HCT116 (cell line): ENCODE measurements at regions of chr12 and their contacts with region 1.

Region 1: DNA sequence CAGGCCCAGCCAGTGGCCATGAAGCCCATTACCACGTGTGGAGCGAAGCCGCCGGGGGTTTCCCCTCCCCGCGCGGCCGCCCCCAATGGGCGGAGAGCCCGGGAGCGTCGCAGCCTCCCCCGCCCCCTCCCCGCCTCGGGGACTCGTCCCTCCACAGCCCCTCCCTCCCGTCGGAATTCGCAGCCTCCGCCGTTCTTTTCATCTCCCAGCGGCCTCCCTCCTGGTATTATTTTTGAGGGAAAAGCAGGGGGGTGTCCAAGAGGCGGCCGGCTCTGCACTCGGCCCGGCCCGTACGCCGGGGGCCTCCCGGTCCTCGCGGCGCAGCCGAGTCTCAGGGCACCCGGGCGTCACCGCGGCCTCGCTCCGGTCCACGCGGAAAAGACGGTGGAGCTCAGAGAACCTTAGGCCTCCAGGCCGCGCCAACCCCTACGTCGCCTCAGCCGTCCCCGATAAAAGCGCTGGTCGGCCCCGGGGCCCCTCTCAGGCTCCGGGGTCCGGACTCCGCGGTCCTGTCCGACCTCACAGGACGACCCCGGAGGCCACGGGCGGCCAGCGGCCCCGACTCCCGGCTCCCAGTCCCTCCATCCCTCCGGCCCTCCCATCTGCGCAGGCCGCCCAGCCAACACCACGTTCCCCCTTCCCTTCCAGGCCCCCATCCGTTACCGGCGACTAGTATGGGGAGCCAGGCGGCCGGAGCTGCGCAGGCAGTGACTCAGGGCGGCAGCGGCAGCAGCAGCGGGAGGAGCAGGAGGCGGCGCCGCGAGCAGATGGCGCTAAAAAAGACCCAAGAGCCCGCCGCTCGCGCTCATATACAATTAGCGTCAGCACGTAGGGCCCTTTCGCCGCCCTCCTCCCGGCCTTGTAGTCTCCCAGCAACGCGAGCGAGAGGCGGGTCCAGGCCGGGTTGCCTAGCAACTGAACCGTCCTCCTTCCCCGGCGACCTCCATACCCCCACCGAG is at the start of gene NAP1L1:
- DNase-seq: peak; percentile 85
- ATAC-seq: peak; percentile 89
- H3K4me3 ChIP-seq: peak within 1 kb of the TSS; percentile 64 to 70
- H3K27ac ChIP-seq: peak within 1 kb of the TSS; percentile 88
- H3K4me1 ChIP-seq: peaks cover 13 to 27% of the 10 kb centered on the region in 2 experiments; a peak in 3 of 4 replicates
- H3K27me3 ChIP-seq: no peaks in the 10 kb centered on the region
- CTCF ChIP-seq: no peak
- POLR2A ChIP-seq: peak; percentile 72
- RAD21 ChIP-seq: no peak
- total RNA-seq, gene NAP1L1: 531 TPM

Region 2: DNA sequence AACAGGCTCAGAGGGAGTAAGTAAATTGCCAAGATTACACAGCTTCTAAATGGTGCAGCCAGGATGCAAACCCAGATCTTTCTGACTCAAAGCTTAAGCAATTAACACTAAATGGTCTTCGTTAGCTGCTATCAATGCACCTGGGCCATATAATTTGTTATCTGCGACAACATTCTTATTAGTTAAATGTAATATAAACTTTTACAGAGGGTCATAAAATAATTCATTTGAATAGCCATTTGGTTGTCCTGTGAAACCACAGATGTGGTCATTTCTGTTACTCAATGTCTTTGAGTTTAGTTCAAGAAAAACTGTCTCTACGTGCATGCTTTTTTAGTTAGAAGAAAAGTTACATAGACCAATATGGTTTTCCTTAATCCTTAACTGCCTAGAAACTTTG is 22.4 kb after region 1 on chr12:
- CTCF ChIA-PET with region 1: no interaction called
- POLR2A ChIA-PET with region 1: no interaction called
- RAD21 ChIA-PET with region 1: no interaction called
- intact Hi-C with region 1: no loop called
- DNase-seq: no peak
- ATAC-seq: no peak
- H3K4me3 ChIP-seq: no peak overlapping the region
- H3K27ac ChIP-seq: no peak overlapping the region
- H3K4me1 ChIP-seq: peaks cover 0 to 4% of the 10 kb centered on the region in 2 experiments; a peak in 1 of 4 replicates
- H3K27me3 ChIP-seq: no peaks in the 10 kb centered on the region
- CTCF ChIP-seq: no peak
- POLR2A ChIP-seq: no peak
- RAD21 ChIP-seq: no peak

Region 3: DNA sequence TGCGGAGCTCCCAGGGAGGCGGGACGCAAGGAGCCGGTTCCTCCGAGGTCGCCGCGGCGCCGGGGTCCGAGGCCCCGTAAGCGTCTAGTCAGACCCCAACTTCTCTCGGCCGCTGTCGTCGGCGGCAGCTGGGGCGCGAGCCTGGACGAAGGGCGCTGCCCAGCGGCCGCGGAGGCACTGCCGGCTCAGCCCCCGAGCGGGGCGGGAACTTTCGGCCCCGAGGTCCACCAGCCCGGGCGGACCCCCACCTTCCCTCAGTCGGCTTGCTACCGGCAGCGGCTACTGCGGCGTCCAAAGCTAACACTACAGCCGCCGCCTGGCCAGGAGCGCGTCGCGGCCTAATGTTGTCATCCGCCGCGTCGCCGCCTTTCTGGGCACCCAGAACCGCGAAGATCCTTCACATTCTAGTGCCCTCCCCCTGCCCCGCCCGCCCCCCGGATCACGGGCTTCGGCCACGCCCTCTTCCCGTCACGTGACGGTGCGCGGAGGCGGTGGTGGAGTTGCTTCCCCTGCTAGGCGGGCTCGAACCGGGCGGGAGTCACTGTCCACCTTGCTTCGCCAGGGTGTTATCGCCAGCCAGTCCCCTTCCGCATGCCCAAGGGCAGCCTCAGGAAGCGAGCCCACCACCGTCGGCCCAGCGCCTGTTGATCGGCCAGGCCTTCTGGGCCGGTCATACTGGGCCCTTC is 475.4 kb after region 1 on chr12 and contains the start of gene OSBPL8:
- CTCF ChIA-PET with region 1: no interaction called
- POLR2A ChIA-PET with region 1: no interaction called
- RAD21 ChIA-PET with region 1: no interaction called
- intact Hi-C with region 1: loop called (anchors 5 kb)
- DNase-seq: peak; percentile 80
- ATAC-seq: peak; percentile 88
- H3K4me3 ChIP-seq: peak within 1 kb of the TSS; percentile 95 to 96
- H3K27ac ChIP-seq: peak within 1 kb of the TSS; percentile 70
- H3K4me1 ChIP-seq: peaks cover 4 to 21% of the 10 kb centered on the region in 2 experiments; a peak in 3 of 4 replicates
- H3K27me3 ChIP-seq: no peaks in the 10 kb centered on the region
- CTCF ChIP-seq: 0 out of 6 replicates have a peak, but pooled peaks of 1 of the 3 experiments have one; percentile 9
- POLR2A ChIP-seq: peak; percentile 49
- RAD21 ChIP-seq: no peak
- total RNA-seq, gene OSBPL8: 115 TPM